Gastrocnemius medialis (tissue), 4 donors: ENCODE measurements at regions of chr4 and their contacts with region 1.

Region 1: DNA sequence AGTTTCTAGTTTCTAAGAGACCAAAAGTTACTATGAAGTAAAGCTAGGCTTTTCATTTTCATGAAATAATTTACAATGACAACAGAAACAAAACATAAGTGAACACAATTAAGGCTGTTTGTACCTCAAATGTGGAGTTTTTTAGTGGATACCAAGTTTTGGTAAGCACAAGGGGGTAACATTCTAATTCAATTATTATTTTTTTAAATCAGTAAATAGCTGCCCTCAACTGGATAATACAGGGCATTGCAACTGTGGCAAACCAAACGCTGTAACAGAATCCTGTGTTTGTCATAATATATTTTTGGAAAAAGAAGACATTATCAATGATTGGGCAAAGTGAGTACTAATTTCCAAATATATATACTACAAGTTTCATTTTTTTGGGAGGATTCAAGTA is 150.3 kb downstream of the FBXW7 start:
- DNase-seq: peak in 1 of 2 donors; percentile 15
- ATAC-seq: peak; percentile 37 to 59
- H3K4me3 ChIP-seq: no peak overlapping the region
- H3K27ac ChIP-seq: no peak overlapping the region
- H3K4me1 ChIP-seq: peaks cover 10 to 11% of the 10 kb centered on the region in 2 donors
- H3K27me3 ChIP-seq: no peaks in the 10 kb centered on the region
- CTCF ChIP-seq: peak; percentile 26 to 84 (median 58)
- POLR2A ChIP-seq: no peak

Region 2: DNA sequence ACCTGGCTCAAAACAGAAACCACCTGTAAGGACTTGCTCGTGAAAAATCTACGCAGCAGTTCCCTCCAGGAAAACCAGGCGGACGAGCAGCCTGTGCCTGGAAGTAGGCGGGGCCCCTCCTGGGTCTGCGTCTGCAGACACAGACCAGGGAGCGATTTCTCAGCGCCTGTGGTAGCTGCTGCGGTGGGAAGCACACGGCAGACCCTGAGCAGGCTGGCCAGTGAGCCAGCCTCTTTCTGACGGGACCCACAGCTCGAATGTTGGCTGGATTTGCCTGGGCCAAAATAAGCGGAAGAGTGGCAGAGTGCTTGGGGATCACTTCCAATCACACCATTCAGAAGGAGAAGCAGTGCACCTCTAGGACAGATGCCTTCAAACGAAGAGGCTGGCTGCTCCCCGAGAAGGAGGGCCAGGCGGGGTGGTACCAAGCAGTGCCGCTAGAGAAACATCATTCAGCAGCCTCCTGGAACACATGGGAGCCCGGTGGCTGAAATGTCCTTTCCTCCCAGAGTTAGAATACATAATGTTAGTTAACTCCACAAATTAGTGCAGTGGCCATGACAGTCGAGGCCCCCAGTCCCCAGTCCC is 710.7 kb before region 1 on chr4:
- in situ Hi-C with region 1: loop called in 1 of 4 experiments (anchors 25 kb)
- intact Hi-C with region 1: no loop called
- DNase-seq: no peak
- ATAC-seq: no peak
- H3K4me3 ChIP-seq: peak overlapping the region; percentile 17 to 40 (median 26)
- H3K27ac ChIP-seq: peak overlapping the region in 3 of 4 donors; percentile 19 to 95 (median 35)
- H3K4me1 ChIP-seq: peaks cover 27 to 29% of the 10 kb centered on the region in 2 donors
- H3K27me3 ChIP-seq: no peaks in the 10 kb centered on the region
- CTCF ChIP-seq: no peak
- POLR2A ChIP-seq: no peak

Region 3: GRCh38 chr4:151760712-151761527 is 624.6 kb before region 1 on chr4 and contains the start of gene GATB:
- in situ Hi-C with region 1: loop called in 1 of 4 experiments (anchors 25 kb)
- intact Hi-C with region 1: loop called (anchors 10 kb)
- DNase-seq: peak; percentile 91 to 92
- ATAC-seq: peak; percentile 100
- H3K4me3 ChIP-seq: peak within 1 kb of the TSS; percentile 83 to 95 (median 92)
- H3K27ac ChIP-seq: peak within 1 kb of the TSS; percentile 72 to 88 (median 81)
- H3K4me1 ChIP-seq: peaks cover 7 to 11% of the 10 kb centered on the region in 2 donors
- H3K27me3 ChIP-seq: no peaks in the 10 kb centered on the region
- CTCF ChIP-seq: peak in 3 of 5 experiments; percentile 38 to 63 (median 52)
- POLR2A ChIP-seq: peak; percentile 48 to 55
- total RNA-seq, gene GATB: 18.7 to 34.0 (median 27.6) TPM

Region 4: GRCh38 chr4:152045807-152046571 is 339.6 kb before region 1 on chr4:
- in situ Hi-C with region 1: no loop called
- intact Hi-C with region 1: loop called (anchors 5 kb)
- DNase-seq: peak in 1 of 2 donors; percentile 28
- ATAC-seq: peak; percentile 44 to 84
- H3K4me3 ChIP-seq: peak overlapping the region; percentile 27 to 47 (median 30)
- H3K27ac ChIP-seq: peak overlapping the region in 3 of 4 donors; percentile 16 to 65 (median 40)
- H3K4me1 ChIP-seq: peaks cover 0 to 10% of the 10 kb centered on the region in 2 donors
- H3K27me3 ChIP-seq: no peaks in the 10 kb centered on the region
- CTCF ChIP-seq: peak in 4 of 5 experiments; percentile 39 to 74 (median 61)
- POLR2A ChIP-seq: no peak

Region 5: GRCh38 chr4:152117933-152118507 is 267.5 kb before region 1 on chr4:
- in situ Hi-C with region 1: no loop called
- intact Hi-C with region 1: no loop called
- DNase-seq: no peak
- ATAC-seq: peak in 1 of 2 donors; percentile 3
- H3K4me3 ChIP-seq: no peak overlapping the region
- H3K27ac ChIP-seq: peak overlapping the region in 3 of 4 donors; percentile 63 to 83 (median 71)
- H3K4me1 ChIP-seq: peaks cover 30 to 43% of the 10 kb centered on the region in 2 donors
- H3K27me3 ChIP-seq: no peaks in the 10 kb centered on the region
- CTCF ChIP-seq: no peak
- POLR2A ChIP-seq: no peak

Region 6: GRCh38 chr4:152618971-152619370 is 233.4 kb after region 1 on chr4:
- in situ Hi-C with region 1: no loop called
- intact Hi-C with region 1: no loop called
- DNase-seq: no peak
- ATAC-seq: no peak
- H3K4me3 ChIP-seq: no peak overlapping the region
- H3K27ac ChIP-seq: no peak overlapping the region
- H3K4me1 ChIP-seq: no peaks in the 10 kb centered on the region
- H3K27me3 ChIP-seq: peaks cover 0 to 3% (median 0%) of the 10 kb centered on the region in 3 donors
- CTCF ChIP-seq: no peak
- POLR2A ChIP-seq: no peak

Region 7: DNA sequence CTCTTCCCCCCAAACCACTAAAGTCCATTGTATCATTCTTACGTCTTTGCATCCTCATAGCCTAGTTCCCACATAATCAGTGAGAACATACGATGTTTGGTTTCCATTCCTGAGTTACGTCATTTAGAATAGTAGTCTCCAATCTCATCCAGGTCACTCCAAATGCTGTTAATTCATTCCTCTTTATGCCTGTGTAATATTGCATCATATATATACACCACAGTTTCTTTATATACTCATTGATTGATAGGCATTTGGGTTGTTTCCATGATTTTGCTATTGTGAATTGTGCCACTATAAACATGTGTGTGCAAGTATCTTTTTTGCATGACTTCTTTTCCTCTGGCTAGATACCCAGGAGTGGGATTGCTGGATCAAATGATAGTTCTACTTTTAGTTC is 451.4 kb after region 1 on chr4:
- in situ Hi-C with region 1: no loop called
- intact Hi-C with region 1: no loop called
- DNase-seq: no peak
- ATAC-seq: no peak
- H3K4me3 ChIP-seq: no peak overlapping the region
- H3K27ac ChIP-seq: no peak overlapping the region
- H3K4me1 ChIP-seq: no peaks in the 10 kb centered on the region
- H3K27me3 ChIP-seq: no peaks in the 10 kb centered on the region
- CTCF ChIP-seq: no peak
- POLR2A ChIP-seq: no peak

Region 8: GRCh38 chr4:153074936-153075630 is 689.5 kb after region 1 on chr4:
- in situ Hi-C with region 1: no loop called
- intact Hi-C with region 1: no loop called
- DNase-seq: no peak
- ATAC-seq: no peak
- H3K4me3 ChIP-seq: no peak overlapping the region
- H3K27ac ChIP-seq: no peak overlapping the region
- H3K4me1 ChIP-seq: no peaks in the 10 kb centered on the region
- H3K27me3 ChIP-seq: no peaks in the 10 kb centered on the region
- CTCF ChIP-seq: no peak
- POLR2A ChIP-seq: no peak